ENCODE measurements at regions of chr13 and their contacts with region 1.

Region 1: GRCh38 chr13:49278211-49278610 is 30.5 kb downstream of the CDADC1 start:
- DNase-seq: no peak
- ATAC-seq: no peak
- H3K4me3 ChIP-seq: no peak overlapping the region
- H3K4me3 Mint-ChIP-seq: no peak overlapping the region
- H3K27ac ChIP-seq: no peak overlapping the region
- H3K27ac Mint-ChIP-seq: no peak overlapping the region
- H3K4me1 ChIP-seq: no peaks in the 10 kb centered on the region
- H3K4me1 Mint-ChIP-seq: no peaks in the 10 kb centered on the region
- H3K27me3 ChIP-seq: no peaks in the 10 kb centered on the region
- H3K27me3 Mint-ChIP-seq: no peaks in the 10 kb centered on the region
- CTCF ChIP-seq: no peak

Region 2: GRCh38 chr13:49098771-49099512 is 179.3 kb before region 1 on chr13:
- CTCF ChIA-PET with region 1: interaction called, 3 read pairs
- POLR2A ChIA-PET with region 1: no interaction called
- intact Hi-C with region 1: loop called (anchors 5 kb)
- DNase-seq: peak; percentile 11
- ATAC-seq: no peak
- H3K4me3 ChIP-seq: no peak overlapping the region
- H3K4me3 Mint-ChIP-seq: no peak overlapping the region
- H3K27ac ChIP-seq: no peak overlapping the region
- H3K27ac Mint-ChIP-seq: no peak overlapping the region
- H3K4me1 ChIP-seq: no peaks in the 10 kb centered on the region
- H3K4me1 Mint-ChIP-seq: peaks cover 7% of the 10 kb centered on the region
- H3K27me3 ChIP-seq: no peaks in the 10 kb centered on the region
- H3K27me3 Mint-ChIP-seq: no peaks in the 10 kb centered on the region
- CTCF ChIP-seq: no peak

Region 3: GRCh38 chr13:49240017-49240416 is 38.2 kb before region 1 on chr13:
- CTCF ChIA-PET with region 1: interaction called, 17 read pairs
- POLR2A ChIA-PET with region 1: no interaction called
- intact Hi-C with region 1: loop called (anchors 1 kb)
- DNase-seq: peak; percentile 47
- ATAC-seq: peak; percentile 33
- H3K4me3 ChIP-seq: no peak overlapping the region
- H3K4me3 Mint-ChIP-seq: no peak overlapping the region
- H3K27ac ChIP-seq: no peak overlapping the region
- H3K27ac Mint-ChIP-seq: no peak overlapping the region
- H3K4me1 ChIP-seq: no peaks in the 10 kb centered on the region
- H3K4me1 Mint-ChIP-seq: no peaks in the 10 kb centered on the region
- H3K27me3 ChIP-seq: no peaks in the 10 kb centered on the region
- H3K27me3 Mint-ChIP-seq: no peaks in the 10 kb centered on the region
- CTCF ChIP-seq: peak; percentile 55

Region 4: GRCh38 chr13:49336655-49337054 is 58.4 kb after region 1 on chr13:
- CTCF ChIA-PET with region 1: no interaction called
- POLR2A ChIA-PET with region 1: no interaction called
- intact Hi-C with region 1: no loop called
- DNase-seq: no peak
- ATAC-seq: no peak
- H3K4me3 ChIP-seq: no peak overlapping the region
- H3K4me3 Mint-ChIP-seq: no peak overlapping the region
- H3K27ac ChIP-seq: no peak overlapping the region
- H3K27ac Mint-ChIP-seq: no peak overlapping the region
- H3K4me1 ChIP-seq: no peaks in the 10 kb centered on the region
- H3K4me1 Mint-ChIP-seq: no peaks in the 10 kb centered on the region
- H3K27me3 ChIP-seq: no peaks in the 10 kb centered on the region
- H3K27me3 Mint-ChIP-seq: no peaks in the 10 kb centered on the region
- CTCF ChIP-seq: no peak

Region 5: DNA sequence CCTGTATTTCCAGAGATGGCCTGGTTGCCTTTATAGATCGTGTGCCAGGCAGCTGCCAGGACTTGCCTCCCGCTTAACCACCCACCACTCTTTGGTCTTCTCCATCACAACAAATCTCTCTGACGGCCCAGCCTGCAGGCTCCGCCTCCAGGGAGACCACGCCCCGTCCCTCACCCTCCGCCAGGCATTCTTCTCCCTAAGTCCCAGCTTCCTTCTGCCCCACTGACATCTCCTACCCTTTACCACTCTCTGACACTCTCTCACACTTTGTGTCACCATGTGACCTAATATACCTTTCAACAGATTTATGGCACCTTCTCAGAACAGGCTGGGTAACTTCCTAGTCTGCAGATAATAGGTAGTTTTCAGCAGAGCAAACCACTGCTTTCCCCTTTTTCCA is 70.5 kb after region 1 on chr13:
- CTCF ChIA-PET with region 1: no interaction called
- POLR2A ChIA-PET with region 1: no interaction called
- intact Hi-C with region 1: no loop called
- DNase-seq: no peak
- ATAC-seq: no peak
- H3K4me3 ChIP-seq: no peak overlapping the region
- H3K4me3 Mint-ChIP-seq: no peak overlapping the region
- H3K27ac ChIP-seq: no peak overlapping the region
- H3K27ac Mint-ChIP-seq: no peak overlapping the region
- H3K4me1 ChIP-seq: no peaks in the 10 kb centered on the region
- H3K4me1 Mint-ChIP-seq: no peaks in the 10 kb centered on the region
- H3K27me3 ChIP-seq: no peaks in the 10 kb centered on the region
- H3K27me3 Mint-ChIP-seq: no peaks in the 10 kb centered on the region
- CTCF ChIP-seq: no peak